OCI-LY7 (cell line): ENCODE measurements at regions of chr12 and their contacts with region 1.

Region 1: GRCh38 chr12:50074936-50075807 is 10.0 kb upstream of the SMARCD1 start:
- DNase-seq: peak; percentile 83
- H3K4me3 ChIP-seq: no peak overlapping the region
- H3K27ac ChIP-seq: no peak overlapping the region
- H3K4me1 ChIP-seq: peaks cover 9% of the 10 kb centered on the region
- CTCF ChIP-seq: peak; percentile 92

Region 2: DNA sequence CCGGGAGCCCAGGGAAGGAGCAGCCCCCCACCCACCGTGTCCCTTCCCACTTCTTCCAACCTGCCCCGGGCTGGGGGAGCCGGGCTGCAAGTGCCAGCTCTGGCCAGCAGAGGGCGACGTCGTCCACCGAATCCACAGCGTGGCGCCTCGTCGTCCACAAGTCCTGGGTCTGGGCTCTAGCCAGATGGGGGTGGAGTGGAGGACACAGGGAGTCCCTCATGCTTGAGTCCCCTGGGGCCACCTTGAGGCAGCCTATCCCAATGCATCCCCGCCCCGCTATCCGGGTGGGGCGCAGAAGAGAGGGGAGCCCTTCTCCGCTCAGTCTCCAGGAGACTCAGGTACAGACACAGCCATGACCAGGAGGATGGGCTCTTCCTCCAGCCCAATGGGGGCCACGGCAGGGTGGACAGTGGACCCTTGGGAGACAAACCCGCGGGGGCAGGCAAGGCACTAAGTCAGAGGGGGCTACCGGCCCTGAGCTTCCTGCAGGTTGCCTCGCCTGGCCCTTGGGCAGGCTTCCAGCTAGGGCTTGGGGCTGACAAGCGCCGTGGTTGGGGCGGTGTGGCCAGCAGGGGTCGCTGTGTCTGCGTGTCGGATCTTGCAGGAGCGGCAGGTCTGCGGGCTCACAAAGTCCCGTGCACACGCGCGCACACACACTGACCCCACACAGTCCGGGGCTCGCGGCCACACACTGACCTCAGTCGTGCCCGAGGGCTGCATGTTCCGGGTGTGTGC is 108.0 kb before region 1 on chr12:
- CTCF ChIA-PET with region 1: interaction called, 20 read pairs
- POLR2A ChIA-PET with region 1: no interaction called
- intact Hi-C with region 1: loop called (anchors 1 kb)
- DNase-seq: peak; percentile 86
- H3K4me3 ChIP-seq: peak overlapping the region; percentile 61
- H3K27ac ChIP-seq: no peak overlapping the region
- H3K4me1 ChIP-seq: peaks cover 9% of the 10 kb centered on the region
- CTCF ChIP-seq: peak; percentile 90

Region 3: GRCh38 chr12:50055831-50056638 is 19.1 kb before region 1 on chr12:
- CTCF ChIA-PET with region 1: interaction called, 5 read pairs
- POLR2A ChIA-PET with region 1: interaction called, 4 read pairs
- intact Hi-C with region 1: loop called (anchors 1 kb)
- DNase-seq: peak; percentile 71
- H3K4me3 ChIP-seq: peak overlapping the region; percentile 22
- H3K27ac ChIP-seq: no peak overlapping the region
- H3K4me1 ChIP-seq: peaks cover 17% of the 10 kb centered on the region
- CTCF ChIP-seq: peak; percentile 100

Region 4: DNA sequence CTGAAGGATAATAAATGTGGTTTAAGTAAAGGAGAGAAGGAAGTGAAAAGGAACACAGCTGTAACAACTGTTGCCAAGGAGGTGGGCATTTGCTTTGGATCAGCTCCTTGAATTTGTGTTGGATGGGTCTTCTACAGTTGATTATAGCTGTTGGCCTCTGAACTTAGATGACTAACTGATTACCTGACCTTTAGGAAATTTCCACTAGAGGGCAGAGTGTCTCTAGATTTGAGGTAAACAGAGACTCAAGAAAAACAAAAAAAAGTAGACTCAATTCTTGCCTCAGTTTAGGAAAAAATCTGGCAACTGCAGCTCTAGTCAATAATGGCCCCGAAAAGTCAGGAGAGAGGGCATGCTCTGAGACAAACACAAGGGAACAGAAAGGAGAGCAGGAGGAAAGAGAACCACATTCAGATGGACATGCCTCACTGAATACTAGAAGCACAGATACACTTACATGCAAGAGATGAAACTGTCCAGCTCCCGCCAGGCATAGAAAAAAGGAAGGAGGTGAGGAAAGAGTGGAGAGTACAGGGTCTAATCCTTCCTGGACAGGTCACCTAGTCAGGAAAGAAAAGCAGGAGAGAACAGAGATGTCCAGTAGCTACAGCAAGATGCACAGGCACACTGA is 57.4 kb after region 1 on chr12:
- CTCF ChIA-PET with region 1: no interaction called
- POLR2A ChIA-PET with region 1: no interaction called
- intact Hi-C with region 1: loop called (anchors 1 kb)
- DNase-seq: peak; percentile 69
- H3K4me3 ChIP-seq: no peak overlapping the region
- H3K27ac ChIP-seq: no peak overlapping the region
- H3K4me1 ChIP-seq: no peaks in the 10 kb centered on the region
- CTCF ChIP-seq: peak; percentile 94

Region 5: GRCh38 chr12:50174971-50175715 is 100.0 kb after region 1 on chr12:
- CTCF ChIA-PET with region 1: interaction called, 3 read pairs
- POLR2A ChIA-PET with region 1: no interaction called
- intact Hi-C with region 1: loop called (anchors 1 kb)
- DNase-seq: peak; percentile 69
- H3K4me3 ChIP-seq: no peak overlapping the region
- H3K27ac ChIP-seq: no peak overlapping the region
- H3K4me1 ChIP-seq: no peaks in the 10 kb centered on the region
- CTCF ChIP-seq: peak; percentile 97

Region 6: DNA sequence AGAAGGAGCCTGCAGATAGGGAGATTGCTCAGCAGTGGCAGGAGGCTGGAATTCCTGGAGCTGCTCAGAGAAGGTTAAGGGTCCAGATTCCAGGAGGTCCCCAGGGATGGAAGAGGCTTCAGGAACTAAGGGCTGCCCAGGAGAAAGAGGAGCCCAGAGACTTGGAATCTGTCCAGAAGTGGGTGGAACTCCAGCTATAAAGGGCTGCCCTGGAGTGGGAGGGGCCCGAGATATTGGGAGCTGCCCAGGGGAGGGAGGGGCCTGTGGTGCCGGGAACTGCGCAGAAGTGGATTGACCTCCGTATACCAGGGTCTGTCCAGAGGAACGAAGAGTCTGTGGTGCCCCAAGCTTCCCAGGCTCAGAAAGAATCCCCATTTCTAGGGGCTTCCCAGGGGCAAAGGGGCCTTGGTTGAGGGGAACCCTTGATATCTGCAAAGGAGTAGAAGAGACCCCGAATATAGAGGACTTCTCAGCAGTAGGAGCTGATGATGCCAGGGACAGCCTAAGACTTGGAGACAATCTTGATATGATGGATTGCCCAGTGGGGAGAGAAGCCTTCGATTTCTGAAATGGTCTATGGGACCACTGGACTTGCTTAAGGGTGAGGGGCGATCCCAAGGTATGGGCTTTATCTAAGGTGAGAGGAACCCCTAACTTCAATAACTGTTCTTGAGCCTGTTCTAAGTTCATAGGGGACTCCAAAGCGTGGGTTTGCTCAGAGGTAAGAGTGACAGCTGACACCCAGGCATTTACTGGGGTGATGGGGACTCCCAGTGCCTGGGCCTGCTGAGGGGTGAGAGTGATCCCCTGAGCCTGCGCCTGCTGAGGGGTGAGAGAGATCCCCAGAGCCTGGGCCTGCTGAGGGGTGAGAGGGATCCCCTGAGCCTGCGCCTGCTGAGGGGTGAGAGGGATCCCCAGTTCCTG is 276.2 kb after region 1 on chr12:
- CTCF ChIA-PET with region 1: no interaction called
- POLR2A ChIA-PET with region 1: no interaction called
- intact Hi-C with region 1: no loop called
- DNase-seq: no peak
- H3K4me3 ChIP-seq: no peak overlapping the region
- H3K27ac ChIP-seq: no peak overlapping the region
- H3K4me1 ChIP-seq: no peaks in the 10 kb centered on the region
- CTCF ChIP-seq: no peak